ENCODE measurements at regions of chr6 and their contacts with region 1.

Region 1: GRCh38 chr6:114055349-114055748 is 84.4 kb upstream of the HDAC2 start:
- DNase-seq: no peak
- H3K4me3 ChIP-seq: no peak overlapping the region
- H3K27ac ChIP-seq: no peak overlapping the region
- H3K4me1 ChIP-seq: no peaks in the 10 kb centered on the region
- H3K27me3 ChIP-seq: no peaks in the 10 kb centered on the region
- CTCF ChIP-seq: no peak
- EP300 ChIP-seq: no peak
- POLR2A ChIP-seq: no peak

Region 2: DNA sequence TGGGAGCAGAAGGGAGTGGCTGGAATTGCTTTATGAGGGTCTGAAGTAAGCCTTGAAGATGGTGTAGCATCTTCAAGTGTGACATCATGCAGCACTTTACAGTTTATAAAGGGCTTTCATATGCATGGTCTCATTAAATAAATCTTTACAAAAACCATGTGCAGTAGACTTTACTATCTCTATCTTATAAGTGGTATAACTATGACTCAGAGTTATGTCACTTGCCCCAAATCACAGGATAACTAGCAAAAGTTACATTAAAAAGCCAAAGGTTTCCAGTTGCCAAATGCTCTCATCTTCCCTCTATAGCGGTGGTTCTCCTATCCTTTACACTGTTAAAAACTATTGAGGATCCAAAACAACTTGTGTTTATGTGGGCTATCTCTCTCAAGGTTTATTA is 885.9 kb before region 1 on chr6:
- in situ Hi-C with region 1: no loop called
- intact Hi-C with region 1: loop called (anchors 10 kb)
- DNase-seq: no peak
- H3K4me3 ChIP-seq: no peak overlapping the region
- H3K27ac ChIP-seq: no peak overlapping the region
- H3K4me1 ChIP-seq: peaks cover 0 to 8% (median 2%) of the 10 kb centered on the region in 4 donors
- H3K27me3 ChIP-seq: no peaks in the 10 kb centered on the region
- CTCF ChIP-seq: no peak
- EP300 ChIP-seq: no peak
- POLR2A ChIP-seq: no peak

Region 3: GRCh38 chr6:114253431-114253830 is 198.1 kb after region 1 on chr6:
- in situ Hi-C with region 1: no loop called
- intact Hi-C with region 1: no loop called
- DNase-seq: no peak
- H3K4me3 ChIP-seq: no peak overlapping the region
- H3K27ac ChIP-seq: no peak overlapping the region
- H3K4me1 ChIP-seq: no peaks in the 10 kb centered on the region
- H3K27me3 ChIP-seq: no peaks in the 10 kb centered on the region
- CTCF ChIP-seq: no peak
- EP300 ChIP-seq: no peak
- POLR2A ChIP-seq: no peak

Measured in transverse colon (tissue), 4 donors.